GM12878 (cell line): ENCODE measurements at regions of chr1 and their contacts with region 1.

Region 1: DNA sequence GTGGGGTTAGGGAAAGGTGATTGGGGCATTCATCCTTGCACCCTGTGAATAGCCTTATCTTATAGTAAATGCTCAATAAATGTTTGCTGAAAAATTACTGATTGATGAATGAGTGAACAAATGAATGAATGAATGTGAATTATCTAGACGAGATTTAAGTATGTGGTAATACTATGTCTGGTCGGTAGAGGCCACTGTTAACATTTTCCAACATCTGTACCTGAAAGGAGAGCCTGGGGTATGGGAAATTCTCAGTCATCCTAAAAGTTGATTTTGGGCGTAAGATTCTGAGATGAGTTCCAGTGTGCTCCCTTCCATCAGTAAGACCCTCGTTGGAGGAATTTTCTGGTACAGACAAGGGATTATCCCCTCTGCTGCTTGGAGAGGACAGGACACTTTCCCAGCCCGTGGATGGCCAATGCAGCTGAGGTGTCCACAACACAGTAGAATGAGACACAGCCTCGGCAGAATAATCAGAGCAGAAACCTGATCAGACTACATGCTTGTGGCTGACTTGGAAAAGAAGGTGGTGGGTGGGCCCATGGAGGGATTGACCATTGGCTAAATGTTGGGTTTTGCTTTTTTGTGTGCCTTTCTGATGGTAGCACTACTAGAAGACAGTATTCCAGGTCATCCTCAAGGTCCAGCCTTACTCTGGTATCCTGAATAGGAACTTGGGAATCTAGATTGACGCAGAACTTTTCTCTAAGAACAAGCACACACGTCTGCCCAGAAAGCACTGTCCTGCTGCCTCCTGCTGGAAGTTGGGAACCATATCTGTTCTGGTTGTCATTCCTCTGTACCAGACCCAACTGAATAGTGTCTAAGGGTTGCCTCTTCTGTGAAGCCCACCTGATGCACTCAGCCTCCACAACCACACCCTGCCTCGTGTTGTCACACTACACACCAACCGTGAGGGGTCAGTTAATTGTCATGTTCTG is 262.0 kb downstream of the TNR start:
- DNase-seq: no peak
- ATAC-seq: peak; percentile 79
- H3K4me3 ChIP-seq: no peak overlapping the region
- H3K27ac ChIP-seq: no peak overlapping the region
- H3K4me1 ChIP-seq: no peaks in the 10 kb centered on the region
- H3K27me3 ChIP-seq: peaks cover 0 to 5% of the 10 kb centered on the region in 2 experiments; a peak in 1 of 4 replicates
- CTCF ChIP-seq: peak; percentile 53 to 67 (median 66); a peak in 5 of 6 replicates
- EP300 ChIP-seq: no peak
- POLR2A ChIP-seq: no peak
- RAD21 ChIP-seq: peak; percentile 71

Region 2: DNA sequence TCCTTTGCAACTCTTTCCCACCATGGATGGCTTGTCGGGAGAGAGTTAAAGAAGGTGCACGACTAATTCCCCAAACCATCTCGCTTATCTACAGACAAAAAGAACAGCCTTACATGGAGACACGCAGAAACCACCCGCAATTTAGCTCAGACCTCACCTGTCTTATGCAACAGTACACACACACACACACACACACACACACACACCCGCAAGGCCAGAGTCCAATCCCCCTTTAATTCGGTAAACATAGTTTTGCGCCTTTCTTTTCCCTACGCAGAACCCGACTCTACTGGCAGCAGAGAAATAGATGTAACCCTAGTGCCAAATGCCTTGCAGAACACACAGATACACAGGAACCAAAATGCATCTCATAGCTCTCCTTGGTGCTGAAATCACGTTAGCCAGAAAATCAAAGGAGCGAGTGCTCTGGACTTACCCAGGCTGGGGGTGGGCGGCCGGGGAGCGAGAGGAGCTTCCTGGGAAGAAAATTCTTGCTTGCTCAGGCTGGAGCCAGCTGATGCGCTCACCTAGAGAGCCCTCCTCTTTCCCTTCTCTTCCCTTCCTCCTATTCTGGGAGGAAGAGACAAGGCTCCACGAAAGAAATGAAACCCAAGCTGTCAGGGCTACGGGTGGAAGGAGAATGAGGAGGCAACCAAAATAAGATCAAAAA is 261.5 kb after region 1 on chr1:
- CTCF ChIA-PET with region 1: no interaction called
- POLR2A ChIA-PET with region 1: no interaction called
- RAD21 ChIA-PET with region 1: no interaction called
- SMC1A ChIA-PET with region 1: interaction called, 3 read pairs
- in situ Hi-C with region 1: no loop called
- intact Hi-C with region 1: loop called (anchors 2 kb)
- DNase-seq: no peak
- ATAC-seq: peak; percentile 66
- H3K4me3 ChIP-seq: no peak overlapping the region
- H3K27ac ChIP-seq: no peak overlapping the region
- H3K4me1 ChIP-seq: no peaks in the 10 kb centered on the region
- H3K27me3 ChIP-seq: 0 out of 4 replicates have a peak, but pooled peaks cover 0 to 4% of the 10 kb centered on the region in 2 experiments
- CTCF ChIP-seq: no peak
- EP300 ChIP-seq: no peak
- POLR2A ChIP-seq: no peak
- RAD21 ChIP-seq: no peak

Region 3: GRCh38 chr1:175757381-175758015 is 276.1 kb after region 1 on chr1:
- CTCF ChIA-PET with region 1: no interaction called
- POLR2A ChIA-PET with region 1: no interaction called
- RAD21 ChIA-PET with region 1: no interaction called
- SMC1A ChIA-PET with region 1: no interaction called
- in situ Hi-C with region 1: no loop called
- intact Hi-C with region 1: loop called (anchors 5 kb)
- DNase-seq: no peak
- ATAC-seq: peak; percentile 98
- H3K4me3 ChIP-seq: no peak overlapping the region
- H3K27ac ChIP-seq: no peak overlapping the region
- H3K4me1 ChIP-seq: no peaks in the 10 kb centered on the region
- H3K27me3 ChIP-seq: no peaks in the 10 kb centered on the region; a peak in 1 of 4 replicates
- CTCF ChIP-seq: peak; percentile 75 to 94 (median 94)
- EP300 ChIP-seq: no peak
- POLR2A ChIP-seq: no peak
- RAD21 ChIP-seq: peak; percentile 59

Region 4: DNA sequence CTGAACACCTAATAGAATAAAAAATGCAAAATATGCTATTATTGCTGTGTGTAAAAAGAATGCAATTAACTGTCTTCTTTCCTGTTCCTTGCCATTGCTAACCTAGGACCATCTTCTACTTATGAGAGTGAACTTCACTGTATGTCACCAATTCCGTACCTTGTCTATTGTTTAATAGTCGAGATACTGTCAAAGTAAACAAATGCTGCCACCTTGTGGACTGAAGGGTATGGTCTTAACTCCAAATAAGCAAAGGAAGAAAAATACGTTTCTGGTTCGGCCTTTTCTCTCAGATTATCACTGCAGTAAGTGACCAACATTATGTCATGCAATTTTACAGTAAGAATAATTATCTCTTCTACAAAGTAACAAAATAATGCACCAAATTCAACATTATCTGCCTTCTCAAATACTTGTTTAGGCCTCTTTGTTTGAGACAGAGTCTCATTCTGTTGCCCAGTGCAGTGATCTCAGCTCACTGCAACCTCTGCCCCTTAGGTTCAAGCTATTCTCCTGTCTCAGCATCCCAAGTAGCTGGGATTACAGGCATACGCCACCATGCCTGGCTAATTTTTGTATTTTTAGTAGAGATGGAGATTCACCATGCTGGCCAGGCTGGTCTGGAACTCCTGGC is 592.2 kb after region 1 on chr1:
- CTCF ChIA-PET with region 1: no interaction called
- POLR2A ChIA-PET with region 1: no interaction called
- RAD21 ChIA-PET with region 1: no interaction called
- SMC1A ChIA-PET with region 1: no interaction called
- in situ Hi-C with region 1: loop called (anchors 10 kb)
- intact Hi-C with region 1: loop called (anchors 1 kb)
- DNase-seq: peak; percentile 7
- ATAC-seq: peak; percentile 91
- H3K4me3 ChIP-seq: no peak overlapping the region
- H3K27ac ChIP-seq: no peak overlapping the region
- H3K4me1 ChIP-seq: no peaks in the 10 kb centered on the region
- H3K27me3 ChIP-seq: no peaks in the 10 kb centered on the region
- CTCF ChIP-seq: peak; percentile 48 to 69 (median 61)
- EP300 ChIP-seq: no peak
- POLR2A ChIP-seq: no peak
- RAD21 ChIP-seq: peak; percentile 79